GM12878 (cell line): ENCODE measurements at regions of chr17 and their contacts with region 1.

Region 1: DNA sequence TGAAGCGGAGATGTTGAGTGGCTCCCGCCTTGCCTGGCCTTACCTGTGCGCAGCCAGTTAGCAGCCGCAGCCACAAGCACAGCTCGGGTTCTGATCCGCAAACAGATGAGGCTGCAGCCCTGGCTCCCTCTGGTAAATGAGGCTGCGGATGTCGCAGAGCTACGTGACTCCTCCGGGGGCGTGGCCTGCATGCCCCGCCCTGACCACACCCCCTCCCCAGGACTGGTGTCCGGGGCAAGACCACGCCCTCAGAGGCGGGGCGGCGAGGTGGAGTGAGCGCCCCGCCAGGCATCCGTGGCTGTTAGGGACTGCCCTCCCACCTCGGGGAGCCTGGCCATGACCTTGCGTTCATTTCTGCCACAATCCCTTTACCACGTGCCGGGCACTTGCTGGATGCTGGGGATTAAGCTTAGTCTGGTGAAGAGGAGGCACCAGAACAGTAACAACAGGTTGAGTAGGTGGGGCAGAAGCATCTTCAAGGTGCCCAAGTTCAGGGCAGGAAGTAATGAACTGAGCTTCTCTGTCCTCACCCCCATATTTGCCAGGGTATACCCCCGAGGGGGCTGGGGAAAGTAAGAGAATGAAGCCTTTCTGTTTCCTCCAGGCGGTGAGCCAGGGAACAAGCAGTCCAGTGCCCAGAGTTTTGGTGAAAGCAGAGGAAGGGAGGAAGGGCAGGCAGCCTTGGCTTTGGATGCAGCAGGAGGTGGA is at the start of gene ALDOC:
- DNase-seq: peak; percentile 88
- ATAC-seq: peak; percentile 97
- H3K4me3 ChIP-seq: peak within 1 kb of the TSS; percentile 66
- H3K27ac ChIP-seq: peak within 1 kb of the TSS; percentile 46
- H3K4me1 ChIP-seq: peaks cover 29% of the 10 kb centered on the region
- H3K27me3 ChIP-seq: no peaks in the 10 kb centered on the region
- CTCF ChIP-seq: no peak
- EP300 ChIP-seq: no peak
- POLR2A ChIP-seq: peak; percentile 82
- RAD21 ChIP-seq: no peak
- polyA plus RNA-seq, gene ALDOC: 66.6 to 107 TPM

Region 2: GRCh38 chr17:28592260-28592659 is 15.3 kb after region 1 on chr17:
- CTCF ChIA-PET with region 1: interaction called, 9 read pairs
- POLR2A ChIA-PET with region 1: interaction called, 91 read pairs
- RAD21 ChIA-PET with region 1: interaction called, 24 read pairs
- SMC1A ChIA-PET with region 1: interaction called, 25 read pairs
- in situ Hi-C with region 1: no loop called
- intact Hi-C with region 1: no loop called
- DNase-seq: no peak
- ATAC-seq: no peak
- H3K4me3 ChIP-seq: no peak overlapping the region
- H3K27ac ChIP-seq: no peak overlapping the region
- H3K4me1 ChIP-seq: no peaks in the 10 kb centered on the region
- H3K27me3 ChIP-seq: no peaks in the 10 kb centered on the region
- CTCF ChIP-seq: no peak
- EP300 ChIP-seq: no peak
- POLR2A ChIP-seq: no peak
- RAD21 ChIP-seq: no peak

Region 3: GRCh38 chr17:28598799-28599310 is 21.9 kb after region 1 on chr17 and contains the start of gene SPAG5:
- CTCF ChIA-PET with region 1: interaction called, 9 read pairs
- POLR2A ChIA-PET with region 1: interaction called, 91 read pairs
- RAD21 ChIA-PET with region 1: interaction called, 24 read pairs
- SMC1A ChIA-PET with region 1: interaction called, 25 read pairs
- in situ Hi-C with region 1: no loop called
- intact Hi-C with region 1: loop called (anchors 2 kb)
- DNase-seq: peak; percentile 80
- ATAC-seq: peak; percentile 95
- H3K4me3 ChIP-seq: peak within 1 kb of the TSS; percentile 98
- H3K27ac ChIP-seq: peak within 1 kb of the TSS; percentile 94
- H3K4me1 ChIP-seq: peaks cover 5% of the 10 kb centered on the region
- H3K27me3 ChIP-seq: no peaks in the 10 kb centered on the region
- CTCF ChIP-seq: no peak
- EP300 ChIP-seq: no peak
- POLR2A ChIP-seq: peak; percentile 95
- RAD21 ChIP-seq: no peak
- polyA plus RNA-seq, gene SPAG5: 73.5 to 139 TPM

Region 4: DNA sequence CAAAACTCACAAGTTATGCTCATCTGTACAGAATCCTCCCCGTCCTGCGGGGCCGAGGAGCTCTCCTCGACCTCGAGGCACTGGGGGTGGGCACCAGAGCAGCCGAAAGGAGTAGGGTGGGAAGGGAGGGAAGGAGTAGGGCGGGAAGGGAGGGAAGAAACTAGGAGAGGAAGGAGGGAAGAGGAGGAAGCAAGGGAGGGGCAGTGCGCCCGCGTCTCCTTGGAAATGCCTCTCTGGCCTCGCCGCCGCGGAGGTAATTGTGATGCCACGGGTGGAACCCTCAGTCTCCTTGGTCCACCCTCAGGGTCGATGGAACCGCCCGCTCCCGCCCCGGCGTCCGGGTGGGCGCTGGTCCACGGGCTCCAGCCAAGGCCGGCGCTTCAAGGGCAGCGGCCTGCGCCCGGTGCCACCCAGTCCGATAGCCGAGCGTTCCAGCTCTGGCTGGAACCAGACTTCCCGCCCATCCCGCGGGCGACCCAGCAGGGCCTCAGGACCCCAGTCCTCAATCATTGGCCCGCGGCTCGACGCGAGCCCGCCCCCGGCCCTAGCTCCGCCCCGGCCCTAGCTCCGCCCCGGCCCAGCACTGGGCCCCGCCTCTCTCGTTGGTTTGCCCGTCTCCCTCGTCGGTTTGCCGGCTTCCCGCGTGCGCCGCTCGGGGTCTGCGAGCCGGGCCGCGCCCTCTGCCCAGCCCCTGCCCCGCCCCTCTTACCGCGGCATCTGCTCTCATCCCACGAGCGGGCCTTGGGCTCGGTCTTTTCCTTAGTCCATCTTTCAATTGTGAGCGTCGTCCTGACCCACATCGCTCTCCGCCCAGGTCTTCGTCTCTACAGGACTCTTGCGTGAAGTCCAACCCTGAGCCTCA is 134.2 kb after region 1 on chr17:
- CTCF ChIA-PET with region 1: interaction called, 3 read pairs
- POLR2A ChIA-PET with region 1: interaction called, 10 read pairs
- RAD21 ChIA-PET with region 1: no interaction called
- SMC1A ChIA-PET with region 1: no interaction called
- in situ Hi-C with region 1: no loop called
- intact Hi-C with region 1: no loop called
- DNase-seq: peak; percentile 50
- ATAC-seq: peak; percentile 94
- H3K4me3 ChIP-seq: peak overlapping the region; percentile 73
- H3K27ac ChIP-seq: peak overlapping the region; percentile 61
- H3K4me1 ChIP-seq: peaks cover 9% of the 10 kb centered on the region
- H3K27me3 ChIP-seq: no peaks in the 10 kb centered on the region
- CTCF ChIP-seq: no peak
- EP300 ChIP-seq: no peak
- POLR2A ChIP-seq: peak; percentile 62; the same call in 1 of the 2 replicates
- RAD21 ChIP-seq: no peak